IMR-90 (cell line): ENCODE measurements at regions of chr10 and their contacts with region 1.

Region 1: GRCh38 chr10:101840741-101841453 is 2.7 kb downstream of the KCNIP2 start:
- DNase-seq: peak; percentile 80
- ATAC-seq: peak; percentile 90
- H3K4me3 ChIP-seq: 0 out of 2 replicates have a peak overlapping the region, but pooled peaks have one; percentile 11
- H3K27ac ChIP-seq: no peak overlapping the region
- H3K4me1 ChIP-seq: peaks cover 5% of the 10 kb centered on the region; the same call in 1 of the 2 replicates
- H3K27me3 ChIP-seq: no peaks in the 10 kb centered on the region
- CTCF ChIP-seq: peak; percentile 98
- POLR2A ChIP-seq: no peak
- RAD21 ChIP-seq: peak; percentile 97

Region 2: GRCh38 chr10:101629837-101630632 is 210.9 kb before region 1 on chr10:
- CTCF ChIA-PET with region 1: no interaction called
- POLR2A ChIA-PET with region 1: no interaction called
- dilution Hi-C with region 1: no loop called
- in situ Hi-C with region 1: no loop called
- intact Hi-C with region 1: no loop called
- DNase-seq: no peak
- ATAC-seq: no peak
- H3K4me3 ChIP-seq: no peak overlapping the region
- H3K27ac ChIP-seq: no peak overlapping the region
- H3K4me1 ChIP-seq: no peaks in the 10 kb centered on the region
- H3K27me3 ChIP-seq: no peaks in the 10 kb centered on the region
- CTCF ChIP-seq: no peak
- POLR2A ChIP-seq: no peak
- RAD21 ChIP-seq: no peak

Region 3: DNA sequence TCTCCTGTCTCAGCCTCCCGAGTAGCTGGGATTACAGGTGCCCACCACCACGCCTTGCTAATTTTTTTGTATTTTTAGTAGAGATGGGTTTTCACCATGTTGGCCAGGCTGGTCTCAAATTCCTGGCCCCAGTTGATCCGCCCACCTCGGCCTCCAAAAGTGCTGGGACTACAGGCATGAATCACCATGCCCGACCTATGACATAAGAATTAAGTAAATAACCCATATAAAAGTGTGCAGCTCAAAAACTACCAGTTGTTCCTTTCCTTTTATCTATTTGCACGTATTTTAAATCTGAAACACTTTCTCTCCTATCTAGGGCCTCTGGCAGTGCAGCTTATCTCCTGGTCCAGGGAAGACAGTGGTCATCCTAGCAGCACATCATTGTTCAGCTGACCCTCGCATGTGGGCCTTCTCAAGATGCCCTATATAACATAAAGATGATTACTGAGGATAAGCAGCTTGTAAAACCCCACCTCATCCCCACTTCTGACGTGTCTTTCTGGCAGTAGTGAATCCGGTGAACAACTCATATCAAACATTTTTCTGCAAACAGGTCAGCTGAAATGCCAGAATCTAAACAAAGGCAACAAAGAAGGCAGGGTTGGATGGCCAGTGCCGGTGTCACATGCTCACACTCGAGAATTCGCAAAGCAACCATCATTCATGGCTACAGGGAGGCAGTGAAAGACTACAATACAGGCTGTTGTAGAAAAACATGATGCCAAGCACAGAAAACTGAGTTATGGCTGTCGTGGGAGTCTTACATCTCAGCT is 38.7 kb after region 1 on chr10:
- CTCF ChIA-PET with region 1: interaction called, 12 read pairs
- POLR2A ChIA-PET with region 1: no interaction called
- dilution Hi-C with region 1: no loop called
- in situ Hi-C with region 1: no loop called
- intact Hi-C with region 1: loop called (anchors 2 kb)
- DNase-seq: peak; percentile 97
- ATAC-seq: peak; percentile 79
- H3K4me3 ChIP-seq: no peak overlapping the region
- H3K27ac ChIP-seq: peak overlapping the region; percentile 81
- H3K4me1 ChIP-seq: peaks cover 13% of the 10 kb centered on the region
- H3K27me3 ChIP-seq: no peaks in the 10 kb centered on the region
- CTCF ChIP-seq: no peak
- POLR2A ChIP-seq: no peak
- RAD21 ChIP-seq: no peak

Region 4: GRCh38 chr10:101889256-101890210 is 48.6 kb after region 1 on chr10:
- CTCF ChIA-PET with region 1: interaction called, 23 read pairs
- POLR2A ChIA-PET with region 1: no interaction called
- dilution Hi-C with region 1: no loop called
- in situ Hi-C with region 1: no loop called
- intact Hi-C with region 1: loop called (anchors 1 kb)
- DNase-seq: peak; percentile 78
- ATAC-seq: peak; percentile 97
- H3K4me3 ChIP-seq: no peak overlapping the region
- H3K27ac ChIP-seq: no peak overlapping the region
- H3K4me1 ChIP-seq: no peaks in the 10 kb centered on the region
- H3K27me3 ChIP-seq: no peaks in the 10 kb centered on the region
- CTCF ChIP-seq: peak; percentile 90
- POLR2A ChIP-seq: no peak
- RAD21 ChIP-seq: peak; percentile 87

Region 5: DNA sequence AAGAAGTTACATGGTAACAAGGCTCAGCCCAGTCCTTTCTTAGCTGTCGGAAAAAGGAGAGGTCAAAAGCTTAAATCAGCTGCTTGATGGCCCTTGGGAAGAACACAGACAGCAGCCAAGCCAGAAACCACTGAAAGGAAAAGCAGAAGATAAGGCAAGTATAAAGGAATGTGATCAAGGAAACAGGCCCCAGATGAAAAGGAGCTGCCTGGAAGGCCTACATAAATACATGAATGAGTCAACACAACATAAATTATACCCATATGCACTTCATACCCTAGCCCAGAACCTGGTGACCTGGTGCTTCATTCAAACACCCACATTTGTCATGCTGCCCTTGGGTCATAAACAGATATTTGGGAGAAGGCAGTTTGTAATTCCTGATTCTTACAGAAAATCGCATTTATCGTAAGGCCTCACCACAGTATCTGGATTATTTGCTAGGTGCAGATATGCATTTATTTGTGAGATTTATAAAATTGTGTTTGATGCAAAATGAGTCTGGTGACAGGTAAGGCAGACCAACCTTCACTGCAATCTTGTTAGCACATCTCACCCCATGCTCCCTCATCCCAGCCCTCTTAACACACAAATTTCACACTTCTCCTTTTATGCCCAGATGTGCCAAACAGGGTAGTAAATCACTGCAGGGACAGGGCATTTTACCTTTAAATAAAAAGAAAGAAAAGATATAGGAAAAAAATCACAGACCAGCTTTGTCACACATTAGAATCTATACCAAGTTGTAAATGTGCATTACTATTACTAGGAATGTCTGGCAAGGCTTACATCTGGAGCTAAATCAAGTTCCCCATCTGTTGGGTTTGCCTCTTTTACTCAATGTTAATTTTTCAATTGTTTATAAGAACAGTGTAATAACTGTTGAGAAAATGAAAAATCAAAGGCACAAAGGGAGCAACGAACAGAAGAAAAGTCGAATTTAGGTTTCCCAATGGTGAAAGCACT is 97.7 kb after region 1 on chr10:
- CTCF ChIA-PET with region 1: interaction called, 6 read pairs
- POLR2A ChIA-PET with region 1: interaction called, 4 read pairs
- dilution Hi-C with region 1: no loop called
- in situ Hi-C with region 1: no loop called
- intact Hi-C with region 1: loop called (anchors 1 kb)
- DNase-seq: peak; percentile 93
- ATAC-seq: peak; percentile 75
- H3K4me3 ChIP-seq: no peak overlapping the region
- H3K27ac ChIP-seq: peak overlapping the region; percentile 93
- H3K4me1 ChIP-seq: peaks cover 39% of the 10 kb centered on the region
- H3K27me3 ChIP-seq: no peaks in the 10 kb centered on the region
- CTCF ChIP-seq: no peak
- POLR2A ChIP-seq: no peak
- RAD21 ChIP-seq: 0 out of 2 replicates have a peak, but pooled peaks have one; percentile 7

Region 6: GRCh38 chr10:102009801-102010425 is 169.0 kb after region 1 on chr10:
- CTCF ChIA-PET with region 1: interaction called, 60 read pairs
- POLR2A ChIA-PET with region 1: interaction called, 6 read pairs
- dilution Hi-C with region 1: no loop called
- in situ Hi-C with region 1: loop called (anchors 5 kb)
- intact Hi-C with region 1: loop called (anchors 1 kb)
- DNase-seq: peak; percentile 93
- ATAC-seq: peak; percentile 100
- H3K4me3 ChIP-seq: no peak overlapping the region
- H3K27ac ChIP-seq: no peak overlapping the region
- H3K4me1 ChIP-seq: no peaks in the 10 kb centered on the region
- H3K27me3 ChIP-seq: no peaks in the 10 kb centered on the region
- CTCF ChIP-seq: peak; percentile 99; the same call in 1 of the 2 replicates
- POLR2A ChIP-seq: peak; percentile 53; the same call in 1 of the 2 replicates
- RAD21 ChIP-seq: peak; percentile 100

Region 7: DNA sequence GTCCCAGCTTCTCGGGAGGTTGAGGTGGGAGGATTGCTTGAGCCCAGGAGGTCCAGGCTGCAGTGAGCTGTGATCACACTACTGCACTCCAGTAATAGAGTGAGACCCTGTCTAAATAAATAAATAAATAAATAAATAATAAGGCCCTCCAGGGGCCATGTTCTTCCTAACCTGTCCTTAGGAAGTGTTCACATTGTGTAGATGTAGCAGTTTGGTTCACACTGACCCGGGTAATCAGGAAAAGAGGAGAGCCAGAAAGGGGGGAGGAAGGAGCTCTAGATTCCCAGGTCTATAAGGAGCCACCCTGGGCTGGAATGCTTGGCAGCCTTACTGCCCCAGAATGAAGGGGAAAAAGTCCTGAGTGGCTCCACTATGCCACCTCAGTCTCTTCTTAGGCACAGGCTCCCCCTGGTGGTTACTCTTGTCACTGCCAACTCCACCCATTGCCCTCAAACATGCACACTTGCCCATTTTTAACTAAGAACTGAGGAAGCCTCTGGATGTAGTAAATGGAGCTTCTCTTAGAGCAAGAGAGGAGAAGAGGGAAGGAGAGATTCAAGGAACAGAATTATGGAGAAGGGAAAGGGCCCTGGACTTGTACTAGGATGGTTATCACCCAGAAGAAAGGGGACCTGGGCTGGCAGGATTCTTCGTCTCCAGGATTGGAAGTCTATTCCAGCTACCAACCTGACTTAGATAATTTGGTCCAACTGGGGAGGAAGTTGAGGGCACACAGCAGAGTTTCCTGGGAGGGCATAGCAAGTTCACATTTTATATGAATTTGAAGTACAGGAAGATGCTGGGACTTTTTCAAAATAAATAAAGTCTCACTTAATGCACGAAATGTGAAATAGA is 232.0 kb after region 1 on chr10:
- CTCF ChIA-PET with region 1: interaction called, 3 read pairs
- POLR2A ChIA-PET with region 1: interaction called, 3 read pairs
- dilution Hi-C with region 1: no loop called
- in situ Hi-C with region 1: no loop called
- intact Hi-C with region 1: loop called (anchors 1 kb)
- DNase-seq: peak; percentile 73
- ATAC-seq: peak; percentile 99
- H3K4me3 ChIP-seq: no peak overlapping the region
- H3K27ac ChIP-seq: no peak overlapping the region
- H3K4me1 ChIP-seq: no peaks in the 10 kb centered on the region
- H3K27me3 ChIP-seq: no peaks in the 10 kb centered on the region
- CTCF ChIP-seq: peak; percentile 90
- POLR2A ChIP-seq: no peak
- RAD21 ChIP-seq: peak; percentile 88